ENCODE measurements at regions of chr3 and their contacts with region 1.

Region 1: DNA sequence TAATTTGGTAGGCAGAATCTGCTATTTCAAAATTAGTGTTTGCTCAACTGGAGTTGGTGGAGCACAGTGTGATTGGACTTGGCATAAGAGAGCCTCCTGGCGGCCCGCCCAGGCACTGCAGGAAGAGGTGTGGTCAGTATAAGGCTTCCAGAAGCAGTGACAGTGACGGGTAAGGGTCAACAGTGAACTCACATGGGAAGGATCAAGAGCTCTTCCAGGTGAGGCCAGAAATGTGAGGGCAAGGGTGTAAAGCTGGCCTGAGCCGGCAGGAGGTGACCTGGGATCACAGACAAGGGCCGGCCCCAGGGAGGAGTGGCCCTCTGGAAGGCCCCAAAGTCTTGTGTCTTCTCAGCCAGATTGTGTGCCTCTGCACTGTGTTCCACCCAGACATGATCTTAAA is 93.2 kb upstream of the RNF7 start:
- DNase-seq: peak; percentile 63 to 97
- H3K4me3 ChIP-seq: no peak overlapping the region
- H3K27ac ChIP-seq: no peak overlapping the region
- H3K4me1 ChIP-seq: no peaks in the 10 kb centered on the region; a peak in 1 of 7 replicates
- H3K27me3 ChIP-seq: no peaks in the 10 kb centered on the region
- CTCF ChIP-seq: peak; percentile 72 to 93 (median 72)
- EP300 ChIP-seq: no peak
- POLR2A ChIP-seq: no peak
- RAD21 ChIP-seq: peak; percentile 71 to 74

Region 2: GRCh38 chr3:141460097-141460704 is 184.7 kb before region 1 on chr3:
- CTCF ChIA-PET with region 1: interaction called, 19 read pairs
- POLR2A ChIA-PET with region 1: no interaction called
- DNase-seq: peak; percentile 69 to 92
- H3K4me3 ChIP-seq: no peak overlapping the region
- H3K27ac ChIP-seq: no peak overlapping the region
- H3K4me1 ChIP-seq: peaks cover 0 to 3% (median 0%) of the 10 kb centered on the region in 4 experiments; a peak in 3 of 7 replicates
- H3K27me3 ChIP-seq: no peaks in the 10 kb centered on the region
- CTCF ChIP-seq: peak; percentile 92 to 94 (median 94)
- EP300 ChIP-seq: no peak
- POLR2A ChIP-seq: no peak
- RAD21 ChIP-seq: peak; percentile 96 to 97

Region 3: DNA sequence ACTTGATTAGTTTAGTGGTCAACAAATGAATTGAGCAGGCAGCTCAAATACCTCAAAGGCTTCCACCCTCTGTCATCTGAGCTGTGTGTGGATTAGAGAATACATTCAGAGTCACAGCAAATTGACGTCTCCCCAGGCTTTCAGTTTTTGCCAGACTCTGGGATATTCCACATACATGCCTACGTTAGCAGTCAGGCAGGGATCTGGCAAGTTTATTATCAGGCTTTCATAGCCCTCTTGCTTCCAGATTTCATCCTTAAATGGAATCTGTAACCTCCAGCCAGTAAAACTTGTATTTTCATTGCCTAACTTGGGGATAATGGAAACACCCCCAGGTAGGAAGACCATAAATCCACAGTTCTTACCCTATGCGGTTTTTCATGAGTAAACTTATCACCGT is 42.2 kb before region 1 on chr3:
- CTCF ChIA-PET with region 1: interaction called, 10 read pairs
- POLR2A ChIA-PET with region 1: no interaction called
- DNase-seq: no peak
- H3K4me3 ChIP-seq: no peak overlapping the region
- H3K27ac ChIP-seq: no peak overlapping the region
- H3K4me1 ChIP-seq: no peaks in the 10 kb centered on the region
- H3K27me3 ChIP-seq: no peaks in the 10 kb centered on the region
- CTCF ChIP-seq: no peak
- EP300 ChIP-seq: no peak
- POLR2A ChIP-seq: peak in 1 of 2 experiments; percentile 49; a peak in 1 of 3 replicates
- RAD21 ChIP-seq: no peak

Region 4: GRCh38 chr3:141632779-141633374 is 12.1 kb before region 1 on chr3:
- CTCF ChIA-PET with region 1: interaction called, 32 read pairs
- POLR2A ChIA-PET with region 1: no interaction called
- DNase-seq: no peak
- H3K4me3 ChIP-seq: no peak overlapping the region
- H3K27ac ChIP-seq: no peak overlapping the region
- H3K4me1 ChIP-seq: no peaks in the 10 kb centered on the region
- H3K27me3 ChIP-seq: no peaks in the 10 kb centered on the region
- CTCF ChIP-seq: peak; percentile 20 to 38 (median 35)
- EP300 ChIP-seq: no peak
- POLR2A ChIP-seq: no peak
- RAD21 ChIP-seq: peak; percentile 7 to 36; a peak in 3 of 4 replicates

Region 5: DNA sequence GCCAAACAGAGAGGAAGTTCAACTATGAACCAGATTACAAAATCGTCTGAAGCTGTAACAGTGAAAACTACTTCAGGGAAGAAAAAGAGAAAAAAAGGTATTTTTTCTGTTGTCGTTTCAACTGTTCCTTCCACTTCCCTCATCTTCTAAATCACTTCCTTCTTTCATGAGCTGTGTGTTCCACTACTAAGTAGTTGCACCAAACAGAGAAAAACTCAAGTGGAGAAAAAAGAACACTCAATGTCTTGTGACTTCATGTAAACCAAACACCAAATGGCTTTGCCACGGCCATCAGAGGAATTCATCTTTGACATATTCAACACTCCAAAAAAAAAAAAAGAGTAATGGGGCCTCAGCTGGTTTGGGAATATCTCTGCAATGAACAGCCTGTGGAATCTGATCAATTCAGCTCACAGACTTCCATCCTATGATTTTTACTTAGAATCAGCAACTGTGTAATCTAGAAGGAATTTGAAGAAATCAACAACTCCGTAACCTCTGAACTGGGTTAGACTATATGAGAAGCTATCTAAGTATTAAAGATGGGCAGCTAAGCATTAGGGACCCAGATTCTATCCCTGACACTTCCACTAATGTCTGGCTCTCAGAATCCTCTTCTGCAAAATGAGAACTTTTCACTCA is 45.6 kb after region 1 on chr3:
- CTCF ChIA-PET with region 1: interaction called, 11 read pairs
- POLR2A ChIA-PET with region 1: no interaction called
- DNase-seq: no peak
- H3K4me3 ChIP-seq: no peak overlapping the region
- H3K27ac ChIP-seq: no peak overlapping the region
- H3K4me1 ChIP-seq: no peaks in the 10 kb centered on the region
- H3K27me3 ChIP-seq: no peaks in the 10 kb centered on the region
- CTCF ChIP-seq: no peak
- EP300 ChIP-seq: no peak
- POLR2A ChIP-seq: no peak
- RAD21 ChIP-seq: no peak

Region 6: GRCh38 chr3:141729240-141729639 is 84.3 kb after region 1 on chr3:
- CTCF ChIA-PET with region 1: interaction called, 11 read pairs
- POLR2A ChIA-PET with region 1: no interaction called
- DNase-seq: no peak
- H3K4me3 ChIP-seq: no peak overlapping the region
- H3K27ac ChIP-seq: no peak overlapping the region
- H3K4me1 ChIP-seq: no peaks in the 10 kb centered on the region
- H3K27me3 ChIP-seq: no peaks in the 10 kb centered on the region
- CTCF ChIP-seq: peak; percentile 36 to 50 (median 43)
- EP300 ChIP-seq: no peak
- POLR2A ChIP-seq: no peak
- RAD21 ChIP-seq: peak; percentile 24 to 27; a peak in 2 of 4 replicates

Region 7: GRCh38 chr3:142098964-142099363 is 454.0 kb after region 1 on chr3:
- CTCF ChIA-PET with region 1: no interaction called
- POLR2A ChIA-PET with region 1: no interaction called
- DNase-seq: no peak
- H3K4me3 ChIP-seq: no peak overlapping the region
- H3K27ac ChIP-seq: no peak overlapping the region
- H3K4me1 ChIP-seq: no peaks in the 10 kb centered on the region
- H3K27me3 ChIP-seq: peaks cover 0 to 1% (median 0%) of the 10 kb centered on the region in 4 experiments; a peak in 1 of 7 replicates
- CTCF ChIP-seq: no peak
- EP300 ChIP-seq: no peak
- POLR2A ChIP-seq: no peak
- RAD21 ChIP-seq: no peak